CD8-positive, alpha-beta T cell (primary cell): ENCODE measurements at regions of chr7 and their contacts with region 1.

Region 1: GRCh38 chr7:8072496-8072895 is 103.9 kb downstream of the GLCCI1 start:
- DNase-seq: no peak
- ATAC-seq: no peak
- H3K4me3 ChIP-seq: no peak overlapping the region
- H3K4me3 Mint-ChIP-seq: no peak overlapping the region
- H3K27ac ChIP-seq: no peak overlapping the region
- H3K27ac Mint-ChIP-seq: no peak overlapping the region
- H3K4me1 ChIP-seq: no peaks in the 10 kb centered on the region
- H3K4me1 Mint-ChIP-seq: peaks cover 37% of the 10 kb centered on the region
- H3K27me3 ChIP-seq: no peaks in the 10 kb centered on the region
- H3K27me3 Mint-ChIP-seq: no peaks in the 10 kb centered on the region
- CTCF ChIP-seq: no peak

Region 2: GRCh38 chr7:8056431-8056830 is 16.1 kb before region 1 on chr7:
- CTCF ChIA-PET with region 1: no interaction called
- POLR2A ChIA-PET with region 1: no interaction called
- intact Hi-C with region 1: loop called in 1 of 2 experiments (anchors 2 kb)
- DNase-seq: no peak
- ATAC-seq: no peak
- H3K4me3 ChIP-seq: no peak overlapping the region
- H3K4me3 Mint-ChIP-seq: no peak overlapping the region
- H3K27ac ChIP-seq: no peak overlapping the region
- H3K27ac Mint-ChIP-seq: no peak overlapping the region
- H3K4me1 ChIP-seq: peaks cover 2% of the 10 kb centered on the region
- H3K4me1 Mint-ChIP-seq: peaks cover 11% of the 10 kb centered on the region
- H3K27me3 ChIP-seq: no peaks in the 10 kb centered on the region
- H3K27me3 Mint-ChIP-seq: no peaks in the 10 kb centered on the region
- CTCF ChIP-seq: no peak